ENCODE measurements at regions of chr14 and their contacts with region 1.

Region 1: DNA sequence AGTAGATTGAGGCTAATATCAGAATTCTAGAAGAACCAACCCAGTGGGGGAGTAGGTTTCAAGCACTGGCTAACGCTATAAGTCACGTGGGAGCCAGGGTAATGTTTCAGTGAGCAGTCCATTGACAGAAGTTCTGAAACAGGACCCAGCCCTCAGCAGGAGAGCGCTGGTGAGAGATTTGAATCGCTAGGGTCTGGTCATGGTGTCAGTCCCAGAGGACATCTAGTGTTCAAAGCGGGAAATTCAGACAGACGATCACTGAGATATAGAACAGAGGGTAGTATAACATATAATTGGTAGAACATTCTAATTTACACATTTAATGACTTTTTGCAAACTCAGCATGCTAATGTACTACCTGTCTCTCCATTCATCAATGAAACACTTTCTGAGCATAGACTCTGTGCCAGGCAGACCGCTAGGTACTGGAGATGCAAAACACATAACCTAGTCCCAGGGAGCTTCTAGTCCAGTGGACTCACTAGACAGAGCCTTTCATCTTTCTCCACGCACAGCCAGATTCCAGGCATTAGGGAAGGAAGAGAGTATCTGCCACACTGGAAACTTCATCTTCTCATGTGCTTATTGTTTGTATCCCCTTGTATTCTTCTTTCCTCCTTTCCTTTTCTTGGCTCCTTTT is 35.4 kb upstream of the RNASE3 start:
- DNase-seq: peak; percentile 79
- ATAC-seq: peak; percentile 98
- H3K4me3 ChIP-seq: no peak overlapping the region
- H3K27ac ChIP-seq: no peak overlapping the region
- H3K4me1 ChIP-seq: peaks cover 9% of the 10 kb centered on the region
- H3K27me3 ChIP-seq: 0 out of 5 replicates have a peak, but pooled peaks cover 0 to 6% of the 10 kb centered on the region in 2 experiments
- CTCF ChIP-seq: peak; percentile 86
- EP300 ChIP-seq: no peak
- POLR2A ChIP-seq: no peak
- RAD21 ChIP-seq: peak; percentile 62

Region 2: DNA sequence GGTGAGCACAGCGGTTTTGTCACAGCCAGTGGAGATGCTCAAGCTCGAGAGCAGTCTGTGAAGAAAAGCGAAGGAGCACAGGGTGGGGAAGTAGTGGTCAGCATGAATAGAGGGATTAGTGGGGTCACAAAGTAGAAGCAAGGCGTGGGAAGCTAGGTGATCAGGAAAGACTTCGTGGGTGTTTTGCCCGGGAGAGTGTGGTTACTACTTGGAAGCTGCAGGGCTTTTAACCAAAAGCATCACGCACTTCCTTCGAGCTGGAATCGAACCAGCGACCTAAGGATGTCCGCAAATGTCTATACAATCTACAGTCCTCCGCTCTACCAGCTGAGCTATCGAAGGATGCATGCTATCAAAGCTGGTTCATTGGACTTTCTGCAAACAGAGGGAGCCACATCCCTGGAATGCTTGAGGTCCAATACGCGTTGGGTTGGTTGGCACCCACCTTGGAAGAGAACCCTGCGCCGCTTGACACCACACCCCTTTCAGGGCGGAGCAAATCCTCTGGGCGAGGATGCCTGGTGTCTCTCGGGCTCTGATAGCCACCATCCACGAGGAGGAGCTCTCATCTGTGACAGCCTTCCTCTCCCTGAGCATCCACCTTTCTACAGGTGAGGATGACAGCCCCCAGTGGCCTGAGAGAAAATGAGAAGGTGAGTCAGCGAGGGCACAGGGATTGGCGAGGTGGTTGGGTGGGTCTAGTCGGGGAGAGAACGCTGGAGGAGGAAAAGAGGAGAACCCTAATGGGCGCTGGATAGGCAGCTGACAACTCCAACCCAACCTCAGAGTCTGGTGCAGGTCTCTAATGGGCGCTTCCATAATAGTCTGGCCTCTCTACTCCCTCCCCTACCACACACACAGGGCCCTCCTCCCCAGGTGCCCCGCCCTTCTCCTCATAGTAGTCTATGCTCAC is 198.3 kb before region 1 on chr14:
- CTCF ChIA-PET with region 1: interaction called, 7 read pairs
- POLR2A ChIA-PET with region 1: no interaction called
- in situ Hi-C with region 1: no loop called
- intact Hi-C with region 1: loop called (anchors 2 kb)
- DNase-seq: peak; percentile 56
- ATAC-seq: peak; percentile 63
- H3K4me3 ChIP-seq: no peak overlapping the region
- H3K27ac ChIP-seq: no peak overlapping the region
- H3K4me1 ChIP-seq: peaks cover 64% of the 10 kb centered on the region
- H3K27me3 ChIP-seq: peaks cover 0 to 23% of the 10 kb centered on the region in 2 experiments; a peak in 3 of 5 replicates
- CTCF ChIP-seq: peak; percentile 62
- EP300 ChIP-seq: no peak
- POLR2A ChIP-seq: no peak
- RAD21 ChIP-seq: 0 out of 2 replicates have a peak, but pooled peaks have one; percentile 40

Region 3: DNA sequence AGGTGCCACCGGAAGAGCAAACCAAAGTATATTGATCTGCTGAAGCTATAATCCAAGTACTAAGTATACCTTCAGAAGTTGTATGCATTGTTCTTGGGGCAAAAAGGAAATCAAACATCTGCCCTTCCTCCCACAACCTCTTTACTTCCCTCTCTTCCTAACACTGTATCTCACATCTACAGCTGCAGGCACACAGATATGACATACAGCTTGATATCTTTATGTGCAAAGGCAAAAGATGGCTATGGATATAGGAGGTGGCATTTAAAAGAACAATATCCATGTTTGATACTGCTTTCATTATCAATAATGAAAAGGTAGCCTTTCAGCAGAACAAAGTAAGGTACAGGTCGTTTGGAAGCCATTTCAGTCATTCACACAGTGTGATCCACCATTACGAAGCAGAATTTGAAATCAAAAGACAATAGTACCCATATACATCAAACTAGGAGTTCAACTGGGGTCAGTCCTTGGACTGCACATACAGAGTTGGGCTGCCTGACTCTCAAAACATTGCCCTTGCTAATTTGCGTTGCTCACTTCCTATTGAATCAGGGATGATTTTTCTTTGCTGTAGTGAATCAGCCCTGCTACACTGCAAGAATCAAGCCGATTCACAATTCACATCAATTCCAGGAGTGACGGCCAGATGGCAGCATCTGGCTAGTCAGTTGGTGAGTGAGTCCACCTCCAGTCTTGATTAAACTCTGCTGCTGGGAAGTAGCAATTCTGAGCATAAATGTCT is 158.3 kb before region 1 on chr14:
- CTCF ChIA-PET with region 1: interaction called, 5 read pairs
- POLR2A ChIA-PET with region 1: no interaction called
- in situ Hi-C with region 1: loop called (anchors 5 kb)
- intact Hi-C with region 1: loop called (anchors 1 kb)
- DNase-seq: peak; percentile 62
- ATAC-seq: peak; percentile 78
- H3K4me3 ChIP-seq: no peak overlapping the region
- H3K27ac ChIP-seq: no peak overlapping the region
- H3K4me1 ChIP-seq: no peaks in the 10 kb centered on the region
- H3K27me3 ChIP-seq: no peaks in the 10 kb centered on the region
- CTCF ChIP-seq: peak; percentile 69
- EP300 ChIP-seq: no peak
- POLR2A ChIP-seq: 0 out of 4 replicates have a peak, but pooled peaks of 1 of the 2 experiments have one; percentile 25
- RAD21 ChIP-seq: 0 out of 2 replicates have a peak, but pooled peaks have one; percentile 12

Region 4: GRCh38 chr14:20811986-20812975 is 43.5 kb before region 1 on chr14:
- CTCF ChIA-PET with region 1: no interaction called
- POLR2A ChIA-PET with region 1: no interaction called
- in situ Hi-C with region 1: no loop called
- intact Hi-C with region 1: no loop called
- DNase-seq: no peak
- ATAC-seq: peak; percentile 62
- H3K4me3 ChIP-seq: no peak overlapping the region; a peak in 1 of 6 replicates
- H3K27ac ChIP-seq: no peak overlapping the region
- H3K4me1 ChIP-seq: peaks cover 27% of the 10 kb centered on the region
- H3K27me3 ChIP-seq: 0 out of 5 replicates have a peak, but pooled peaks cover 0 to 5% of the 10 kb centered on the region in 2 experiments
- CTCF ChIP-seq: no peak
- EP300 ChIP-seq: no peak
- POLR2A ChIP-seq: no peak
- RAD21 ChIP-seq: no peak

Region 5: DNA sequence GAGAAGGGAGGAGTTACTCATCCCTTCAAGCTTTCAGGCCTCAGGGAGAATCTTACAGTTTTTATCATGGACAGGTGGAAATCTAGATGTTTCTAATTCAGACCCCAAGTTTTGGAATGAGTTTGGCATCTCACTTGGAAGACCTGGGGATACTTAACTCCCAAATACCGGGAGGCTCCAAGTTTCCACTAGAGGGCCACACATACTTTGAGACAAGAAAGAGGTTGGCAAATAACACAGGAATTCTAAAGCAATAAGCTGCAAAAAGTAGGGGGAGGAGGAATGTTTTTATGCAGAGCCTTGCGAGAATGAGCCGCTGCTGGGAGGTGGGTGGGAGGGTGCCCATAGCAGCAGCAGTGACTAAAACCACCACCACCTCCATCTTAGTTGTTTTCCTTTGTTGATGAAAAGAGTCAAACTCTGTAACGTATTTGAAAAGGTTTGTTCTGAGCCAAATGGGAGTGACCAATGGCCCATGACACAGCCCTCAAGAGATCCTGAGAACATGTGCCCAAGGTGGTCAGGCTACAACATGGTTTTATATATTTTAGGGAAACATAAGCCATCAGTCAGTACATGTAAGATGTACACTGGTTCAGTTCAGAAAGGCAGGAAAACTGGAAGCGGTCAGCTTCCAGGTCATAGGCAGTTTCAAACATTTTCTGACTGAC is 19.0 kb before region 1 on chr14:
- CTCF ChIA-PET with region 1: interaction called, 3 read pairs
- POLR2A ChIA-PET with region 1: no interaction called
- in situ Hi-C with region 1: no loop called
- intact Hi-C with region 1: loop called (anchors 1 kb)
- DNase-seq: peak; percentile 63
- ATAC-seq: peak; percentile 89
- H3K4me3 ChIP-seq: no peak overlapping the region
- H3K27ac ChIP-seq: no peak overlapping the region
- H3K4me1 ChIP-seq: no peaks in the 10 kb centered on the region
- H3K27me3 ChIP-seq: peaks cover 0 to 12% of the 10 kb centered on the region in 2 experiments; a peak in 2 of 5 replicates
- CTCF ChIP-seq: peak; percentile 45
- EP300 ChIP-seq: no peak
- POLR2A ChIP-seq: no peak
- RAD21 ChIP-seq: peak; percentile 44; the same call in 1 of the 2 replicates

Region 6: GRCh38 chr14:20970983-20971704 is 115.4 kb after region 1 on chr14:
- CTCF ChIA-PET with region 1: interaction called, 32 read pairs
- POLR2A ChIA-PET with region 1: no interaction called
- in situ Hi-C with region 1: no loop called
- intact Hi-C with region 1: loop called (anchors 1 kb)
- DNase-seq: peak; percentile 80
- ATAC-seq: peak; percentile 93
- H3K4me3 ChIP-seq: peak overlapping the region; percentile 54 to 80 (median 80)
- H3K27ac ChIP-seq: no peak overlapping the region
- H3K4me1 ChIP-seq: peaks cover 36% of the 10 kb centered on the region
- H3K27me3 ChIP-seq: peaks cover 0 to 23% of the 10 kb centered on the region in 2 experiments; a peak in 3 of 5 replicates
- CTCF ChIP-seq: peak; percentile 97
- EP300 ChIP-seq: 0 out of 4 replicates have a peak, but pooled peaks of 1 of the 2 experiments have one; percentile 9
- POLR2A ChIP-seq: 0 out of 4 replicates have a peak, but pooled peaks of 1 of the 2 experiments have one; percentile 0
- RAD21 ChIP-seq: peak; percentile 81

Measured in HepG2 (cell line).